ENCODE measurements at regions of chr22 and their contacts with region 1.

Region 1: GRCh38 chr22:26330966-26331625 is 98.0 kb upstream of the ASPHD2 start:
- DNase-seq: peak; percentile 28 to 72
- H3K4me3 ChIP-seq: no peak overlapping the region
- H3K4me1 ChIP-seq: no peaks in the 10 kb centered on the region
- H3K27me3 ChIP-seq: peaks cover 14% of the 10 kb centered on the region

Region 2: GRCh38 chr22:25452116-25452700 is 878.9 kb before region 1 on chr22:
- in situ Hi-C with region 1: loop called (anchors 25 kb)
- DNase-seq: no peak
- H3K4me3 ChIP-seq: no peak overlapping the region
- H3K4me1 ChIP-seq: peaks cover 6% of the 10 kb centered on the region
- H3K27me3 ChIP-seq: no peaks in the 10 kb centered on the region

Region 3: DNA sequence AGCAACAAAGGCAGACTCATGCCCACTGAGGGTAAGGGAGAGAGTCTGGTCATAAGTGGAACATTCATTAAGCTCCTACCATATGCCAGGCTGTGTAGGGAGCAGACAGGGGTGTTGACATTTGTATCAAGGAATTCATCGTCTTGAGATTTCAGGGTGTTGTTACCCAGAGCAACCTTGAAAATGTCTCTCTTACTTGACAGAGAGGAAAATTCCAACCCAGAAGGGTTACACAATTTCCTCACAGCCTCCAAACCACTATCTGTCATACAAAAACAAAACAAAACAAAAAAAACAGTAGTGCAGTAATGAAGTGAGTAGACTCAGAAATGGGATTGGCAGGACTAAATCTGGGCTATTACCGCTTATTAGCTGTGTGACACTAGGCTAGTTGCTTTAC is 439.5 kb after region 1 on chr22:
- in situ Hi-C with region 1: no loop called
- DNase-seq: no peak
- H3K4me3 ChIP-seq: no peak overlapping the region
- H3K4me1 ChIP-seq: no peaks in the 10 kb centered on the region
- H3K27me3 ChIP-seq: no peaks in the 10 kb centered on the region